GM12878 (cell line): ENCODE measurements at regions of chr9 and their contacts with region 1.

Region 1: DNA sequence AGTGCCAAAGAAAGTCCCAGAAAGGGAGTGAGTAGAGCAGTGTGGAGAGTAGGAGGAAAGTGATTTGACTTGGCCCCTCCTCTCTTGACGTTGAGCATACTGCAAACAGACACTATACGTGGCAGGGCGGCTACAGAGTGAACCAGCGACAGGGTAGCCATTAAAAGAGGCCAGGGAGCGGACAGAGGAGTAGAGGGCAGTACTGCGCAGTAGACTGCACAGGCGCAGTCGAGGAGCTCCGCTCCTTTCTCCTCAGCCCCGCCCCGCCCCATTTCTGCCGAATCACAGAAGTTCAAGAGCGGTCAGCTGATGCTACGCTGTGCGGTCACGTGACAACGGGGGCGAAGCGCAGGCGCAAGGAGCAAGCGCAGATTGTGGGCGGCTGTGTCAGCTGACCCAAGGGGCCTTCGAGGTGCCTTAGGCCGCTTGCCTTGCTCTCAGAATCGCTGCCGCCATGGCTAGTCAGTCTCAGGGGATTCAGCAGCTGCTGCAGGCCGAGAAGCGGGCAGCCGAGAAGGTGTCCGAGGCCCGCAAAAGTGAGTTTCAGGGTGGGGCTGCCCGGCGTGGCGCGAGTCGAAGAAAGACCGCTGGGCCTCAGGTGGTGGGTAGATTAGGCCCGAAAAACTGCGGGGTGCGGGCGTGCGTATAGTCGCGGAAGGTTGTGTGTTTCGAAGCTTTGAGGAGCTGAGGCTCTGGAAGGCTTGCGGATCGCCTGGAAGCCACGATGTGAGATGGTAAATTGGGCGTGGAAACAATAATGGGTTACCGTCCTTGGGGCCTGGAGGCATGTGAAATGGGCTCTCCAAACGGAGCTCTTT is at the start of gene ATP6V1G1:
- DNase-seq: peak; percentile 96
- ATAC-seq: peak; percentile 95
- H3K4me3 ChIP-seq: peak within 1 kb of the TSS; percentile 98
- H3K27ac ChIP-seq: peak within 1 kb of the TSS; percentile 78
- H3K4me1 ChIP-seq: no peaks in the 10 kb centered on the region; the same call in 1 of the 2 replicates
- H3K27me3 ChIP-seq: no peaks in the 10 kb centered on the region
- CTCF ChIP-seq: peak in 1 of 3 experiments; percentile 17; a peak in 1 of 6 replicates
- EP300 ChIP-seq: peak; percentile 9 to 49; a peak in 1 of 4 replicates
- POLR2A ChIP-seq: peak; percentile 98
- RAD21 ChIP-seq: no peak
- polyA plus RNA-seq, gene ATP6V1G1: 162 to 204 TPM

Region 2: DNA sequence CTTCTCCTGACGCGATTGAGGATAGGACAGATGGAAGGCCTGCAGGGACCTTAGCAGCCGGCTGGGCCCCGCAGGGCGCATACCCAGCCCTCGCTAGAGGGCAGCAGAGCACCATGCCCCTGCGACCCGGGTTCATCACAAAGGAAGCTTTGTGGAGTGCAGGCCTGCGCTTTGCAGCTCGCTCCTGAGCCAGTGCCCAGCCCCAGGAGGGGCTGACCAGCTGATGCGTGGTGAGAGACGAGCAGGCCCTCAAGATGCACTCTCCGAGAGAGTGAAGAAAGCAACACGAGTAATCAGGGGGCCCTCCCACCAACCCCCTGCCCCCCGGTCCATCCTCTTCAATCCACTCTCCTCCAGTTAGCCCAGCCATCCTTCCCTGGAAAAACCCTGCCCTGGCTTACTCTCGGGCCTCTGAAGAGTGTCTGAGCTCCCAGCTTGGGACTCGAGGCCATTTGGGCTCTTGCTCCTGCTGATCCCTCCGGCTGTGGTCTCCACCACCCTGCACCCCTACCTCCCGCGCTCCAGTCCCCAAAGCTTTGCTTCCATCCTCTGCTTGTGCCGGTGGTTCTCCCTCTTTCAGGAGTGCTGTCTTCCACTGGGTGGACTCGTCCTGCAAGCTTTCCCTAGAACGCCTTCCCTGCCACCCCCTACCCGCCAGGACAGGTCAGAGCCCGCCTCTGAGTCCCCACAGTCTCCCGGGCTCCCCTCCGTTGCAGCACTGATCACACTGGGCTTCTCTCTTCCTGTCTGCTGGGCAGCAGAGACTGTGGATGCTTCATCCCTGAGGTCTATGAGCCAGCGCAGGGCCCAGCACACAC is 479.4 kb before region 1 on chr9:
- CTCF ChIA-PET with region 1: no interaction called
- POLR2A ChIA-PET with region 1: no interaction called
- RAD21 ChIA-PET with region 1: no interaction called
- SMC1A ChIA-PET with region 1: no interaction called
- in situ Hi-C with region 1: no loop called
- intact Hi-C with region 1: no loop called
- DNase-seq: no peak
- ATAC-seq: peak; percentile 97
- H3K4me3 ChIP-seq: no peak overlapping the region
- H3K27ac ChIP-seq: no peak overlapping the region
- H3K4me1 ChIP-seq: no peaks in the 10 kb centered on the region; the same call in 1 of the 2 replicates
- H3K27me3 ChIP-seq: no peaks in the 10 kb centered on the region; a peak in 1 of 4 replicates
- CTCF ChIP-seq: peak; percentile 75 to 92 (median 88)
- EP300 ChIP-seq: no peak
- POLR2A ChIP-seq: no peak
- RAD21 ChIP-seq: peak; percentile 63

Region 3: GRCh38 chr9:114327749-114328148 is 259.8 kb before region 1 on chr9:
- CTCF ChIA-PET with region 1: no interaction called
- POLR2A ChIA-PET with region 1: no interaction called
- RAD21 ChIA-PET with region 1: no interaction called
- SMC1A ChIA-PET with region 1: no interaction called
- in situ Hi-C with region 1: no loop called
- intact Hi-C with region 1: no loop called
- DNase-seq: no peak
- ATAC-seq: no peak
- H3K4me3 ChIP-seq: no peak overlapping the region
- H3K27ac ChIP-seq: no peak overlapping the region
- H3K4me1 ChIP-seq: no peaks in the 10 kb centered on the region
- H3K27me3 ChIP-seq: no peaks in the 10 kb centered on the region
- CTCF ChIP-seq: no peak
- EP300 ChIP-seq: no peak
- POLR2A ChIP-seq: no peak
- RAD21 ChIP-seq: no peak

Region 4: GRCh38 chr9:114372921-114373448 is 214.6 kb before region 1 on chr9:
- CTCF ChIA-PET with region 1: no interaction called
- POLR2A ChIA-PET with region 1: no interaction called
- RAD21 ChIA-PET with region 1: no interaction called
- SMC1A ChIA-PET with region 1: no interaction called
- in situ Hi-C with region 1: no loop called
- intact Hi-C with region 1: no loop called
- DNase-seq: peak; percentile 93
- ATAC-seq: peak; percentile 96
- H3K4me3 ChIP-seq: peak overlapping the region; percentile 33; the same call in 1 of the 2 replicates
- H3K27ac ChIP-seq: peak overlapping the region; percentile 99
- H3K4me1 ChIP-seq: peaks cover 62% of the 10 kb centered on the region
- H3K27me3 ChIP-seq: no peaks in the 10 kb centered on the region
- CTCF ChIP-seq: peak in 2 of 3 experiments; percentile 0 to 28; a peak in 2 of 6 replicates
- EP300 ChIP-seq: peak; percentile 72 to 86
- POLR2A ChIP-seq: peak; percentile 83
- RAD21 ChIP-seq: peak; percentile 25; the same call in 1 of the 2 replicates

Region 5: DNA sequence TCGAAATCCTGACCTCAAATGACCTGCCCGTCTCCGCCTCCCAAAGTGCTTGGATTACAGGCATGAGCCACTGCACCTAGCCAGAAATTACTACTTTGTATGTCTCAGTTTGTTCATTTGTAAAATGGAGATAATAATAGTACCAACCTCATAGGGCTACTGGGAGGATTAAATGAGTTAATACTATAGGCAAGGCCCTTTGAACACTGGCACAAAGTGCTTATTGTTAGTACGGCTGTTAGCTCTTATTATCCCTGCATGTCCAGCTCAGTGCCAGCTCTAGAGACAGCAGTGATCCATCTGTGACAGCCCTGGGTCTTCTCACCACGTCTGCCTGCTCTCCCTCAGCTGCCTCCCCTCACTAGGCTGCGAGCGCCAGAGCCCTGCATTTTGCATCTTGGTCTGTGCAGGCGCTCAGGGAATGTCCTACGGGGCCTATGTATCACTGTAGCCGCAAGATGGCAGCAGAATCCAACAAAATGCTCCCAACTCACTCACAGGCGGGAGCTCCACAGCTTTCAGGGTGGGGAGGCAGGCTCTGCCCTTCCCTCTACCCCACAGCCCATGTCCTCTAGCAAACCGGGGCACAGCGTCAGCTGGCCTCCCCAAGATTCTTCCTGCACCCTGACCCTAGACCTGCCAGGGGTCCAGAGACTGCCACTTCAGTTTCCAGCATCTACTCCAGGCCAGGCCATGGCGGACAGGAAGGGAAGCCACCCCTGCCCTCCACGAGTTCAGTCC is 182.1 kb before region 1 on chr9:
- CTCF ChIA-PET with region 1: interaction called, 17 read pairs
- POLR2A ChIA-PET with region 1: no interaction called
- RAD21 ChIA-PET with region 1: interaction called, 12 read pairs
- SMC1A ChIA-PET with region 1: interaction called, 13 read pairs
- in situ Hi-C with region 1: no loop called
- intact Hi-C with region 1: loop called (anchors 5 kb)
- DNase-seq: no peak
- ATAC-seq: peak; percentile 98
- H3K4me3 ChIP-seq: no peak overlapping the region
- H3K27ac ChIP-seq: no peak overlapping the region
- H3K4me1 ChIP-seq: peaks cover 5% of the 10 kb centered on the region; the same call in 1 of the 2 replicates
- H3K27me3 ChIP-seq: no peaks in the 10 kb centered on the region; a peak in 1 of 4 replicates
- CTCF ChIP-seq: peak; percentile 76 to 93 (median 84)
- EP300 ChIP-seq: no peak
- POLR2A ChIP-seq: no peak
- RAD21 ChIP-seq: peak; percentile 91

Region 6: DNA sequence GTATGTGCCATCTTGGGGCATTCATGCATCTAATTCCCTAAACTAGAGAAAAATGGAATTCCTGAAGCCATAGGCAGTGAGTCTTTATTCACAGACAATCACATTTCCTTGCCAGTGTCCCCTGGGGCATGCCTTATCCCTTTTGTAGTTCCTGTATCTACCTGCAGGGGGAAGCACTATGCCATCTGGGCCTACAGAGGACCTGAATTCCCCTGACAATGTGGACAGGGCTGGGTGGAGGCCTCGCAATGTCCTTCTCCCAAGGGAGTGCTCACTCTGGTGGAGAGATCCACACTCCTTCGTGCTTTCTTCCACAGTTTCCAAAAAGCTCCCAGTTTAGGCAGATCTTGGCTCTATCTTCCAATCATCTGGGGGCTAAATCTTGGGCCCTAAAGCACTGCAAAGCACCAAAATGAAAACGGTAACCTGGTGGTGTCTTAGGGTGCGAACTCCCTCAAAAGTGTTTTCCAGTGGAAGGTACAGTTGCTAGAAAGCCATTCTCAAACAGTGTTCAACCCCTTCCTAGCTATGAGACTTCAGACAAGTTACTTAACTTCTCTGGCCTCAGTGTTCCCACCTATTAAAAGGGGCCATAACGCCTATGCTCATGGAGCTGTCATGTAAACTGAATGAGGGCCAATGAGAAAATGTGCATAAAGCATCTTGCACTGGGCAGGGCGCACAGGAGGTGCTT is 99.8 kb before region 1 on chr9:
- CTCF ChIA-PET with region 1: interaction called, 7 read pairs
- POLR2A ChIA-PET with region 1: interaction called, 4 read pairs
- RAD21 ChIA-PET with region 1: interaction called, 11 read pairs
- SMC1A ChIA-PET with region 1: interaction called, 20 read pairs
- in situ Hi-C with region 1: no loop called
- intact Hi-C with region 1: loop called (anchors 1 kb)
- DNase-seq: peak; percentile 34
- ATAC-seq: peak; percentile 80
- H3K4me3 ChIP-seq: no peak overlapping the region
- H3K27ac ChIP-seq: no peak overlapping the region
- H3K4me1 ChIP-seq: peaks cover 15% of the 10 kb centered on the region
- H3K27me3 ChIP-seq: no peaks in the 10 kb centered on the region
- CTCF ChIP-seq: peak; percentile 90 to 93 (median 93); a peak in 5 of 6 replicates
- EP300 ChIP-seq: no peak
- POLR2A ChIP-seq: no peak
- RAD21 ChIP-seq: peak; percentile 85

Region 7: GRCh38 chr9:114611516-114612271 is 24.1 kb after region 1 on chr9:
- CTCF ChIA-PET with region 1: interaction called, 88 read pairs
- POLR2A ChIA-PET with region 1: interaction called, 68 read pairs
- RAD21 ChIA-PET with region 1: interaction called, 83 read pairs
- SMC1A ChIA-PET with region 1: interaction called, 99 read pairs
- in situ Hi-C with region 1: no loop called
- intact Hi-C with region 1: loop called (anchors 2 kb)
- DNase-seq: no peak
- ATAC-seq: peak; percentile 20
- H3K4me3 ChIP-seq: peak overlapping the region; percentile 95
- H3K27ac ChIP-seq: peak overlapping the region; percentile 98
- H3K4me1 ChIP-seq: peaks cover 63% of the 10 kb centered on the region
- H3K27me3 ChIP-seq: no peaks in the 10 kb centered on the region
- CTCF ChIP-seq: no peak
- EP300 ChIP-seq: no peak
- POLR2A ChIP-seq: peak; percentile 63
- RAD21 ChIP-seq: no peak

Region 8: GRCh38 chr9:114624688-114625087 is 37.1 kb after region 1 on chr9:
- CTCF ChIA-PET with region 1: interaction called, 23 read pairs
- POLR2A ChIA-PET with region 1: interaction called, 11 read pairs
- RAD21 ChIA-PET with region 1: interaction called, 44 read pairs
- SMC1A ChIA-PET with region 1: interaction called, 62 read pairs
- in situ Hi-C with region 1: no loop called
- intact Hi-C with region 1: no loop called
- DNase-seq: no peak
- ATAC-seq: no peak
- H3K4me3 ChIP-seq: no peak overlapping the region
- H3K27ac ChIP-seq: no peak overlapping the region
- H3K4me1 ChIP-seq: peaks cover 4% of the 10 kb centered on the region; the same call in 1 of the 2 replicates
- H3K27me3 ChIP-seq: no peaks in the 10 kb centered on the region
- CTCF ChIP-seq: no peak
- EP300 ChIP-seq: no peak
- POLR2A ChIP-seq: no peak
- RAD21 ChIP-seq: no peak

Region 9: DNA sequence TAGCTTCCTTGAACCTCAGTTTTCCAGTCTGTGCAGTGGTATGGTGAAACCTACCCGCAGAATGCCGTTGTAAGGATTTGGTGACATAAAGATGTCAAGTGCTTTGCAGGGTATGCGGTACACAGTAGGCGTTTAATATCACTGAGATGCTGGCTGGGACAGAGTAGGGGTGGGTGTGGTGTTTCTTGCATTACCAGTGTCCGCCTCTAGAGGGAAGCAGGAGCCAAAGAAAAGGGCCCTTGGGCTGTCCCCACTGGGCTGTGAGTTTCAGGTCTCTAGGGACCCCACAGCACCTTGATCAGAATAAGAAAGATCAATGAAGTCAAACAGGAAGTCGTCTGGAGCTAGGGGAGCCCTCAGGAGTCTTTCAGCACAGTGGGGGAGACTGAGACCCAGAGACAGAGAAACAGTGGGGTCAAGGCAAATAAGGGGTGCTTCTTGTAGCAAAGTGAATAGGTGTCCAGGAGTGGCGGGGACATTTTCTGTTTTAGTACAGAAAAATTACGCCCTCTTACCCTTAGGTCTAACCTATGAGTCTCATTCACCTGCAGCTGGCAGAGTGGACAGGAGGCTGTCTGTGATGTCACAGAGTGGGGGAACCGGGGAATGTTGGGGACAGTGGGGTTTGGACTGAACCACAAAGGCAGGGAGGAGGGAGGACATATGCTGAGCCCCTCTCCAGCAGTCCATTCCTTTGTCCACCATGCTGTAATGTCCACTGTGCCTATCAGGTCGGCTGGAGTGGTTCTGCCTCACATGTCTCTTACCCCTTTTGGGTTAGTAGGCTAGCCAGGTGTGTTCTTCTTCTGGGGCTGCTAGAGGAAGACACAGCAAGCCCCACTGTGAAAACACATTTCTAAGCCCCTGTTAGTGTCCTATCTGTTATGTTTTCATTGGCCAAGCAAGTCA is 74.7 kb after region 1 on chr9:
- CTCF ChIA-PET with region 1: interaction called, 18 read pairs
- POLR2A ChIA-PET with region 1: no interaction called
- RAD21 ChIA-PET with region 1: interaction called, 18 read pairs
- SMC1A ChIA-PET with region 1: interaction called, 4 read pairs
- in situ Hi-C with region 1: no loop called
- intact Hi-C with region 1: no loop called
- DNase-seq: no peak
- ATAC-seq: peak; percentile 96
- H3K4me3 ChIP-seq: no peak overlapping the region
- H3K27ac ChIP-seq: no peak overlapping the region
- H3K4me1 ChIP-seq: no peaks in the 10 kb centered on the region
- H3K27me3 ChIP-seq: no peaks in the 10 kb centered on the region
- CTCF ChIP-seq: peak; percentile 75 to 90 (median 81)
- EP300 ChIP-seq: no peak
- POLR2A ChIP-seq: no peak
- RAD21 ChIP-seq: peak; percentile 69